Activated CD8-positive, alpha-beta T cell treated with anti-CD3 and anti-CD28 coated beads for 36 hours (primary cell): ENCODE measurements at regions of chr5 and their contacts with region 1.

Region 1: DNA sequence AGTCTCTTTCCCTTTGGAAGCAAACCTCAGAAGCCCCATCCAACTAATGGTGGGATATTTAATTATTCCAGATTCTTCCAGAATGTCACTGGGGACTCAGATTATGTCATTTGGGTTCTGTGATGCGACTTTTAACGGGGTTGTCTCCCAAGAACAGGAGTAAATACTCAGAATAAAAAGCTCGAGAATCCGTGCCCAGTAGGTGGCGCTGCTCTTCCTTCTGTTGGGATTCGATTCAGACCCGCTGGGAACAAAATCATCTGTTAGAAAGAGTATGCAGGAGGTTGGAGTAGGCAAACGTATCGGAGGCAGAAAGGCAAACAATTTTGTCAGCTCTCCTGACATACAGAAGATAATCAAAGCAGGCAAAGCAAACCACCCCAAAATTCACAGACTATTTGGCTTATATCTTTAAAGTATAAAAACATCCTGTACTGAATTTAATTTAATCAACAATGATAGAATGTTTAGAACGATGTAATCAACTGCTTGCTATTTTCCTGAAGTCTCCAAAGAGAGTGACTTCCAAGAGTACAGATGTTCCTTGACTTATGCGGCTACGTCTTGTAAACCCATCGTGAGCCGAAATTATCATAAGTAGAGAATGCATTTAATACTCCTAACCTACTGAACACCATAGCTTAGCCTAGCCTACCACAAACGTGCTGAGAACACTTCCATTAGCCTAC is 169.8 kb upstream of the RAI14 start:
- DNase-seq: peak; percentile 85
- ATAC-seq: peak; percentile 58
- H3K4me3 Mint-ChIP-seq: no peak overlapping the region
- H3K27ac Mint-ChIP-seq: no peak overlapping the region
- H3K4me1 Mint-ChIP-seq: peaks cover 2% of the 10 kb centered on the region
- H3K27me3 Mint-ChIP-seq: peaks cover 16% of the 10 kb centered on the region
- CTCF ChIP-seq: peak; percentile 83

Region 2: DNA sequence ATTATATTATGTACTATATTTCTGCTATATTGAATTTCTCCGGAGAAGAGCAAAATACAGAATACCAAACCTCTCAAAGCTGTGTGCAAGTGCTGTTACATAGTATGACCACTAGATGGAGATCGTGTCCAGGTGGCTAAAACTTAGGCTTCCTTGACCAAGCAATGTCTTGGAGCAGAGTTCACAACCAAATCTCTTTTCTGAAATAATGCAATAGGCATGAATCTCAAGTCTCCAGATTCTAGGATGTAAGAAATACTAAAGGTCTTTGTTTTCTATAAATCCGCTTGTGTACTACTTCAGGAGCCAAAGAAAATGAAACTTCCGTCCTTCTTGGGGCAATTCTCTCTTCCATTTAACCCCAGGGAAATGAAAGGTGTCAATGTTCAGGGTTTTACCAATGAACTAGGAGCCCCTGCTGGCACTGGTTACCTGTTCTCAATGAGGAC is 11.7 kb before region 1 on chr5:
- CTCF ChIA-PET with region 1: interaction called, 40 read pairs
- POLR2A ChIA-PET with region 1: no interaction called
- intact Hi-C with region 1: no loop called
- DNase-seq: no peak
- ATAC-seq: peak; percentile 79
- H3K4me3 Mint-ChIP-seq: no peak overlapping the region
- H3K27ac Mint-ChIP-seq: no peak overlapping the region
- H3K4me1 Mint-ChIP-seq: no peaks in the 10 kb centered on the region
- H3K27me3 Mint-ChIP-seq: peaks cover 7% of the 10 kb centered on the region
- CTCF ChIP-seq: peak; percentile 92

Region 3: DNA sequence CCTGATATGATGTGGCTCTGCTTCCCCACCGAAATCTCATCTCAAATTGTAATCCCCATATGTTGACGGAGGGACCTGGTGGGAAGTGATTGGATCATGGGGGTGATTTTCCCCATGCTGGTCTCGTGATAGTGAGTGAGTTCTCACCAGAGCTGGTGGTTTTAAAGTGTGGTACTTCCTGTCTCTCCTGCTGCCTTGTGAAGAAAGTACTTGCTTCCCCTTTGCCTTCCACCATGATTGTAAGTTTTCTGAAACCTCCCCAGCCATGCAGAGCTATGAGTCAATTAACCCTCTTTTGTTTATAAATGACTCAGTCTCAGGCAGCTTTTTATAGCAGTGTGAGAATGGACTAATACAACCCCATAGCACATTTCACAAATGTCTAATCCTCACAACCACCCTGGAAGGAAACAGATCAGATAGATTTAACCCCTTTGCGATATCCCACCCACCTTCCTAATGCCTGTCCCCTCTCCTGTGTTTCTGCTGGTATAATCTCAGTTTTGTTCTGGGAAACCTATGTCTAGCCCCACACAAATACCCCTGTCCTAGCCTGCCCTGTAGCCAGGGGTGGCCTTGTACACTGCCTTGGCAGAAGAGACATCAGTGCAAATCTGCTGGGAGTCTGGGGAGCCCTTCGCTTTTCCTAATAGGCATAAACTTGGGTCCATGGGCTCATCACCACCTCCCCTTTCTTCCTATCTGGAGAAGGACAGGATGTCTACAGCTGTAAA is 12.9 kb after region 1 on chr5:
- CTCF ChIA-PET with region 1: interaction called, 22 read pairs
- POLR2A ChIA-PET with region 1: no interaction called
- intact Hi-C with region 1: no loop called
- DNase-seq: peak; percentile 38
- ATAC-seq: peak; percentile 96
- H3K4me3 Mint-ChIP-seq: no peak overlapping the region
- H3K27ac Mint-ChIP-seq: peak overlapping the region; percentile 63
- H3K4me1 Mint-ChIP-seq: peaks cover 12% of the 10 kb centered on the region
- H3K27me3 Mint-ChIP-seq: peaks cover 11% of the 10 kb centered on the region
- CTCF ChIP-seq: no peak

Region 4: DNA sequence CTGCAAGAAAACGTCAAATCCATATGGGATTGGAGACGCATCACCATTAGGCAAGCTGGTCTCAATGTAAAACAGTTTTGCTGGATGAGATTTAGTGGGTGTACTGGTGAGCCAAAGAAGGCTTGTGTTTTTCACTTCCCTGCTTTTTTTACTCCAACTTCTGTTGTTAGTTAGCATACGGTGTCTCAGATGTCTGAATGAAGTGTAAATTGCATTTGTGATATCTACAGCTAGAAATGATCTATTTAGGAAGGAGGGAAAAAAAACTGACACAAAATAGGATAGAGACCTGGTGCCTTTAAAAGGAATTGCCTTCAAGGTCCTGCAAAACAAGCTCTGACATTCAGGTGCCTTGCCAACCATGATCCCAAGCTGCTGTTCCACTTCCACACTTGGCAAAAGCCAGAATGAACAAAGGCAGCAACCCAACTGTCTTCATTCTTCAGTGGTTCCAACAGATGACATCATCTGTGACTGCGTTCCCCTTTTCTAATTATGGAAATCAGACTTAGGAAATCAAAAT is 65.7 kb after region 1 on chr5:
- CTCF ChIA-PET with region 1: no interaction called
- POLR2A ChIA-PET with region 1: no interaction called
- intact Hi-C with region 1: no loop called
- DNase-seq: no peak
- ATAC-seq: no peak
- H3K4me3 Mint-ChIP-seq: no peak overlapping the region
- H3K27ac Mint-ChIP-seq: no peak overlapping the region
- H3K4me1 Mint-ChIP-seq: no peaks in the 10 kb centered on the region
- H3K27me3 Mint-ChIP-seq: peaks cover 7% of the 10 kb centered on the region
- CTCF ChIP-seq: no peak

Region 5: GRCh38 chr5:34648840-34649158 is 162.5 kb after region 1 on chr5:
- CTCF ChIA-PET with region 1: no interaction called
- POLR2A ChIA-PET with region 1: no interaction called
- intact Hi-C with region 1: no loop called
- DNase-seq: no peak
- ATAC-seq: no peak
- H3K4me3 Mint-ChIP-seq: no peak overlapping the region
- H3K27ac Mint-ChIP-seq: no peak overlapping the region
- H3K4me1 Mint-ChIP-seq: no peaks in the 10 kb centered on the region
- H3K27me3 Mint-ChIP-seq: peaks cover 35% of the 10 kb centered on the region
- CTCF ChIP-seq: no peak

Region 6: DNA sequence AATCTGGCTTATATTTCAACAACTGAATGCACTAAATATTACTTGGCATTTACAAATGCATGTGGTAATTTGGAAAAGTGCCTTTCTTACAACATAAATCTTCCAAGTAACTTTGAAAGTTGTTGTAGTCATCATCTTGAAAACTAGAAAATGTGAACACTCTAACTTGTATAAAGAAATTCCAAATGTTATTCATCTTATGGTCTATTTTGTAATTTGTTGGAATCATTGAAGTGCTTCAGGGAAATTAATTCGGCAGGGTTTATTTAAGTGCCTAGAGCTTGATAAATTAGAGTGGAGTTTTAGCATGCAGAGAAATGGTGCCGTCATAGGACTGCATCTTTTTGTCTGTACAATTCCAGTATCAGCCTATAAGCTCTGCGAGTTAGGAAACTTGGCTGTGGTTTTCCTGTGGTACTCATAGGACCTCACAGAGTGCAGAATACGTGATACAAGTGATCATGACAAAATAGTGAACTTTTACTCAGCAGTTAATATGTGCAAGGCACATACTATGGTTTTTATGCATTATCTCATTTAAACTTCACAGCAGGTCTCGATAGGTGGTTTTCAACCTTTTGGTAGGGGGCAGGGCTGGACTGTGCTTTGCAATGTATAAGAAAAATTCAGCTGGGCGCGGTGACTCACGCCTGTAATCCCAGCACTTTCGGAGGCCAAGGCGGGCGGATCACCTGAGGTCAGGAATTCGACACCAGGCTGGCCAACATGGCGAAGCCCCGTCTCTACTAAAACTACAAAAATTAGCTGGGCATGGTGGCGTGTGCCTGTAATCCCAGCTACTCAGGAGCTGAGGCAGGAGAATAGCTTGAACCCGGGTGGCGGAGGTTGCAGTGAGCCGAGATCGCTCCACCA is 249.4 kb after region 1 on chr5:
- CTCF ChIA-PET with region 1: no interaction called
- POLR2A ChIA-PET with region 1: no interaction called
- intact Hi-C with region 1: no loop called
- DNase-seq: no peak
- ATAC-seq: no peak
- H3K4me3 Mint-ChIP-seq: no peak overlapping the region
- H3K27ac Mint-ChIP-seq: no peak overlapping the region
- H3K4me1 Mint-ChIP-seq: no peaks in the 10 kb centered on the region
- H3K27me3 Mint-ChIP-seq: peaks cover 3% of the 10 kb centered on the region
- CTCF ChIP-seq: no peak

Region 7: DNA sequence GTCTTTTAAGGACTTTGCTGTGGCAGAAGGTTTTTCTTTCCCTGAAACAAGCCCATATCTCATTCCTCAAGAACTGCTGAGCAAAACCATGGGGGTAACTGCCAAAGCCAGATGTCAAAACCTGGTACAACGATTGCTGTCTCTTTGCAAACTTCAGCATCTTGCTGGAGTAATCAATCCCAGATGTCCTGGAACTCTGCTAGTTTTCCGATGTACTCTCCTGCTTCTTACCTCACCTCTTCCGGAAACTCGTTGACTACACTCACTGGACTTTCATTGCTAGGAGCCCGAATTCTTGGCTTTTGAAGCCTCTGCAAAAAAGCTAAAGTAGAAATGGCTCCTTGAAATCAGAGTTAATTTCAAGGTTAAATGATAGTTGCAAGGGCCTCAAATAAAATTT is 405.7 kb after region 1 on chr5:
- CTCF ChIA-PET with region 1: interaction called, 10 read pairs
- POLR2A ChIA-PET with region 1: no interaction called
- intact Hi-C with region 1: loop called (anchors 5 kb)
- DNase-seq: no peak
- ATAC-seq: no peak
- H3K4me3 Mint-ChIP-seq: no peak overlapping the region
- H3K27ac Mint-ChIP-seq: no peak overlapping the region
- H3K4me1 Mint-ChIP-seq: no peaks in the 10 kb centered on the region
- H3K27me3 Mint-ChIP-seq: no peaks in the 10 kb centered on the region
- CTCF ChIP-seq: no peak

Region 8: GRCh38 chr5:34898258-34898895 is 412.1 kb after region 1 on chr5:
- CTCF ChIA-PET with region 1: interaction called, 35 read pairs
- POLR2A ChIA-PET with region 1: no interaction called
- intact Hi-C with region 1: loop called (anchors 5 kb)
- DNase-seq: peak; percentile 69
- ATAC-seq: peak; percentile 77
- H3K4me3 Mint-ChIP-seq: no peak overlapping the region
- H3K27ac Mint-ChIP-seq: no peak overlapping the region
- H3K4me1 Mint-ChIP-seq: no peaks in the 10 kb centered on the region
- H3K27me3 Mint-ChIP-seq: no peaks in the 10 kb centered on the region
- CTCF ChIP-seq: peak; percentile 80

Region 9: GRCh38 chr5:34905564-34905963 is 419.3 kb after region 1 on chr5:
- CTCF ChIA-PET with region 1: interaction called, 12 read pairs
- POLR2A ChIA-PET with region 1: no interaction called
- intact Hi-C with region 1: no loop called
- DNase-seq: no peak
- ATAC-seq: no peak
- H3K4me3 Mint-ChIP-seq: no peak overlapping the region
- H3K27ac Mint-ChIP-seq: no peak overlapping the region
- H3K4me1 Mint-ChIP-seq: peaks cover 4% of the 10 kb centered on the region
- H3K27me3 Mint-ChIP-seq: no peaks in the 10 kb centered on the region
- CTCF ChIP-seq: no peak